SK-N-SH (cell line): ENCODE measurements at regions of chr7 and their contacts with region 1.

Region 1: DNA sequence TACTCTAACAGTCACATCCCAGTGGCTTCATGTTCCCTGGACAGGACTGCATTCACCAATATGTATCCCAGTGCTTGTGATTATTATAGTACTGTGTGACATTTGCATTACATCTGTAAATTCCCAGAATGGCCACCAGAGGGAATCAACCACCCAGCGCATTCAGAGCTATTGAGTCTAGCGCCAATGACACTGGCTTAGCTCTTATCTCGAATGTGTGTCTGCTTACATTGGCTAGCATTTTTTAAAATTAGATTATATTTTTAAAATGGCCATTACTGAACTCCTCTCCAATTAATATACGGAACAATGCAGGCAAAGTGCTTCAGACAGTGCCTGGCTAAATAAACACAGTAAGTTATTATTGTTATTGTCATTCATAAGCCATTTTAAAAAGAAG is 36.3 kb downstream of the TRIL start:
- DNase-seq: peak; percentile 84
- H3K4me3 ChIP-seq: peak overlapping the region in 1 of 2 experiments; percentile 6; a peak in 1 of 4 replicates
- H3K27ac ChIP-seq: peak overlapping the region in 1 of 2 experiments; percentile 93; a peak in 2 of 4 replicates
- H3K4me1 ChIP-seq: peaks cover 0 to 13% of the 10 kb centered on the region in 2 experiments; a peak in 3 of 4 replicates
- H3K27me3 ChIP-seq: 0 out of 2 replicates have a peak, but pooled peaks cover 15% of the 10 kb centered on the region
- CTCF ChIP-seq: peak; percentile 97
- EP300 ChIP-seq: peak in 1 of 2 experiments; percentile 77; a peak in 2 of 4 replicates
- RAD21 ChIP-seq: peak; percentile 87

Region 2: GRCh38 chr7:28778786-28779185 is 143.0 kb before region 1 on chr7:
- CTCF ChIA-PET with region 1: no interaction called
- POLR2A ChIA-PET with region 1: no interaction called
- DNase-seq: no peak
- H3K4me3 ChIP-seq: no peak overlapping the region
- H3K27ac ChIP-seq: no peak overlapping the region
- H3K4me1 ChIP-seq: peaks cover 0 to 3% of the 10 kb centered on the region in 2 experiments; a peak in 1 of 4 replicates
- H3K27me3 ChIP-seq: no peaks in the 10 kb centered on the region
- CTCF ChIP-seq: no peak
- EP300 ChIP-seq: no peak
- RAD21 ChIP-seq: no peak

Region 3: GRCh38 chr7:28808796-28809527 is 112.9 kb before region 1 on chr7:
- CTCF ChIA-PET with region 1: no interaction called
- POLR2A ChIA-PET with region 1: no interaction called
- DNase-seq: peak; percentile 31
- H3K4me3 ChIP-seq: no peak overlapping the region
- H3K27ac ChIP-seq: no peak overlapping the region
- H3K4me1 ChIP-seq: peaks cover 6 to 8% of the 10 kb centered on the region in 2 experiments; a peak in 1 of 4 replicates
- H3K27me3 ChIP-seq: no peaks in the 10 kb centered on the region
- CTCF ChIP-seq: peak; percentile 42
- EP300 ChIP-seq: no peak
- RAD21 ChIP-seq: no peak

Region 4: DNA sequence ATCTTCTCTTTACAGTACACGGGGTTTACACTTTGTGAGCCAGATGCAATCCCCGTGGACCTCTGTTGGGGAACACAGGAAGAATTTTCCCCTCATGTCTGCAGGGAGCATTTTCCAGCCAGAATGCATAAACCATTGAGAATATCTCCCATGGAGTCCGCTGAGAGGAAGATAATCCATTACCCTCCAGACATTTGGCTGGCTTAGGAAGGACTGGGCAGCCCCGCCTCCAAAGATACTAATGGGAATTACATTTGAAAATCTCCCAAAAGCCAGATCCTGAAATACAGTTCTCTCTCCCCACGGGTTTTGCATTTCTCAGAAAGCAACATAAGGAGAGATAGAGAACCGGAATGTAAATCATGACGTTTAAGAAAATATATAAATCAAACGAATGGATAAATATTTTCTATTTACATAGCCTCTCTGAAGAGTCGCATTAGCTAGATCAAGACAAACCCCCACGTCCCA is 17.2 kb before region 1 on chr7:
- CTCF ChIA-PET with region 1: interaction called, 163 read pairs
- POLR2A ChIA-PET with region 1: no interaction called
- DNase-seq: peak; percentile 41
- H3K4me3 ChIP-seq: no peak overlapping the region
- H3K27ac ChIP-seq: no peak overlapping the region
- H3K4me1 ChIP-seq: peaks cover 0 to 5% of the 10 kb centered on the region in 2 experiments; a peak in 2 of 4 replicates
- H3K27me3 ChIP-seq: peaks cover 5% of the 10 kb centered on the region; the same call in 1 of the 2 replicates
- CTCF ChIP-seq: no peak
- EP300 ChIP-seq: no peak
- RAD21 ChIP-seq: no peak

Region 5: DNA sequence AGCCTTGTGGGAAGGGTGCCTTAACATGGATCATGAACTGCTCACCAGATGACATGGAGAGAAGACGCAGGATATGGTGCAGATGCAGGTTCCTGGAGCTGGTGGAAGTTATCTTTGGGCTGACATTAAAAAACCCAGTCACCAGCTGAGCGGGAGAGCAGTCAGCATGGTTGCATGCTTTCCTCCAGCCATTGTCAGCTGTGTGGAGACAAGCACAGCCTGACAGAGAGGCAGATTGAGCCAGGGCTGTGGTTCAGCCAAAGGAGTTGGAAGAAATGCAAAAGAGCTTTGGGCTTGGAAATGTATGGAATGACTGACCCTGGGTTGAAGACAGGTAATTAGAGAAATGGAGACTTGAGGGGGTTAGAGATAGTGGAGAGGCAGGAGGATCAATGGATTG is 144.8 kb after region 1 on chr7:
- CTCF ChIA-PET with region 1: interaction called, 12 read pairs
- POLR2A ChIA-PET with region 1: no interaction called
- DNase-seq: no peak
- H3K4me3 ChIP-seq: no peak overlapping the region
- H3K27ac ChIP-seq: no peak overlapping the region
- H3K4me1 ChIP-seq: no peaks in the 10 kb centered on the region; a peak in 1 of 4 replicates
- H3K27me3 ChIP-seq: no peaks in the 10 kb centered on the region
- CTCF ChIP-seq: no peak
- EP300 ChIP-seq: no peak
- RAD21 ChIP-seq: no peak

Region 6: DNA sequence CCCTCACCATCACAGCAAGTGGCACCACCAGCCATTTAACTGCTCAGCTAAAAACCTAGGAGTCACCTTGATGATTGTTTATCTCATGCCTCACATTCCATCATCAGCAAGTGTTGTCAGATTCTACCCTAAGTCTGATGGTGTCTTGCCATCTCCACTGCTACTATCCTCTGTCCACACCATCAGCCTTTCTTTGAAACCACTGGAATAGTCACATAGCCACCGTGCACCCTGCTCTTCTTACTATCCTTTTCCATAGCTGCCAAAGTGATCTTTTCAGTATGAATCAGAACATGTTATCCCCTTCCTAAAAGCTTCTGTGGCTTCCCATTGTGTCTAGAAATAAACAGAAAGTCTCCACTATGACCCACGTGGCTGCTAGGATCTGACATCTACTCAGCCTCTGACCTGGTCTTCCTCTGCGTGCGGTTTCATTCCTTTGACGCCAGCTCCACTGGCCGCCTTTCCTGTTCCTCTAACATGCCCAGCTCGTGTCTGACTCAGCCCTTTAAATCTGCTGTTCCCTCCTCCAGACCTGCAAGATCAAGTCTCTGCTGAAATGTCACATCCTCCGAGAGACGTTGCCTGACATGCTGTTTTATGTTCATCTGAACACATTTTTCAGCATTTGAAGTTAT is 256.3 kb after region 1 on chr7:
- CTCF ChIA-PET with region 1: interaction called, 11 read pairs
- POLR2A ChIA-PET with region 1: no interaction called
- DNase-seq: no peak
- H3K4me3 ChIP-seq: no peak overlapping the region
- H3K27ac ChIP-seq: no peak overlapping the region
- H3K4me1 ChIP-seq: no peaks in the 10 kb centered on the region
- H3K27me3 ChIP-seq: no peaks in the 10 kb centered on the region
- CTCF ChIP-seq: no peak
- EP300 ChIP-seq: no peak
- RAD21 ChIP-seq: no peak

Region 7: GRCh38 chr7:29352062-29352461 is 430.2 kb after region 1 on chr7:
- CTCF ChIA-PET with region 1: interaction called, 93 read pairs
- POLR2A ChIA-PET with region 1: interaction called, 3 read pairs
- DNase-seq: no peak
- H3K4me3 ChIP-seq: no peak overlapping the region
- H3K27ac ChIP-seq: no peak overlapping the region
- H3K4me1 ChIP-seq: 0 out of 4 replicates have a peak, but pooled peaks cover 0 to 4% of the 10 kb centered on the region in 2 experiments
- H3K27me3 ChIP-seq: no peaks in the 10 kb centered on the region
- CTCF ChIP-seq: no peak
- EP300 ChIP-seq: no peak
- RAD21 ChIP-seq: no peak

Region 8: DNA sequence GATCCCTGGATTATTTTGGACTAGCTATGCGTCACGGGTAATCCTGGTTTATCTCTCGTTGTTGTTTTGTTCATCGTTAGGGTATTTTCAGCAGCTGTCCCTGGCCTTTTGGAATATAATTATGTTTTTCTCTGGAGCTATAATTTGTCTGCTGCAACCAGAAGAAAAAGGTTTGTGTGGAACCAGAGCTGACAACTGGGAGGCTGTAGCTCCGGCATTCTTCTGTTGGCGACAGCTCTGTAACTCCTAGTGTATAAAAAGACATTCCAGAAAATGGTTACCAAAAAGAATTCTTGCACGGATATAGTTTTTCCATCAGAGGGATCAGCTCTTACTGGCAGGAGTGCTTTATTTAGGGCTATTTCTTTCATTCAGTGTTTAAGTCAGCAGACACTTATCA is 510.9 kb after region 1 on chr7:
- CTCF ChIA-PET with region 1: interaction called, 14 read pairs
- POLR2A ChIA-PET with region 1: no interaction called
- DNase-seq: no peak
- H3K4me3 ChIP-seq: no peak overlapping the region
- H3K27ac ChIP-seq: no peak overlapping the region
- H3K4me1 ChIP-seq: no peaks in the 10 kb centered on the region
- H3K27me3 ChIP-seq: no peaks in the 10 kb centered on the region
- CTCF ChIP-seq: no peak
- EP300 ChIP-seq: no peak
- RAD21 ChIP-seq: no peak